Posterior vena cava (tissue), 2 donors: ENCODE measurements at regions of chr18 and their contacts with region 1.

Region 1: DNA sequence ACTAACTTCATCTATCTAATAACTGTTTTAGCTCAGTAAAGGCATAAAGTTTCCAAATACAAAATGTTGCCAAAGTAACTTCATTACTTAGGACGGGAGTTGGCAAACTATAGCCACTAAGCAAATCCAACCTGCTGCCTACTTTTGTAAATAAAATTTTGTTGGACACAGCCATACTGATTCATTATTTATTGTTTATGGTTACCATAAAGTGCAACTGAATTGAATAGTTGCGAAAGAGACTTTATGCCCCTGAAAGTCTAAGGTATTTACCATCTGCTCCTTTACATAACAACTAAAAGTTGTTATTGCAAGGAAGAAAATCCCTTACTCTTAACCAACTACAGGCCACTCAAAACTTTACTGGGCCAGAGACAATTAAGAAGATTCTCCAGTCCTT is 256.7 kb upstream of the RBBP8 start:
- DNase-seq: no peak

Region 2: DNA sequence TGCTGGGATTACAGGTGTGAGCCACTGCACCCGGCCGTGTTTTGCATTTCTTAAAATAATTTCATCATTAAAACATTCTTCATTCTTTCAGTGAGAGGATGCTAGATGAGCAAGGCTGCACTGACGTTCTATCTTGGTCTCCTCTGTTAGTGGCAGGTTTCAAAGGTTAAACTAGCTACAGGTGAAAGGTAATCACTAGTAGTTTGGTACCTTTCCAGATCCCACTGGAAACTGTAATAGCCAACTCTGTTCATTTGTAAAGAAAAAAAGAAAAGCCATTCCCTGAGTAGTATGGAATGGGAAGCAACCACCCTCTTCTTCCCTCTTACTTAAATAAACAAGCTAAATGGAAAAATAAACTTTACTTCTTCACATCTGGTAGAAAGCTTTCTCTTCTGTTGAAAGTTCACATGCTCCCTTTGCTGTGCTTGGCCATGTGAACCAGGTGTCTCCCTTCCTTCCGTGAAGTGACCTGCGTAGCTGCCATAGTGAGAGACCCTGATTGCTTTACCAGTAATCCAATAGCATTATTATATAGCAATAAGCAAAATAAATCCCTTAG is 1340.4 kb before region 1 on chr18:
- intact Hi-C with region 1: loop called in 1 of 2 experiments (anchors 5 kb)
- DNase-seq: no peak